K562 (cell line): ENCODE measurements at regions of chr9 and their contacts with region 1.

Region 1: GRCh38 chr9:1869843-1870242 is 145.3 kb upstream of the SMARCA2 start:
- DNase-seq: peak; percentile 10 to 36 (median 13)
- ATAC-seq: peak; percentile 77
- H3K4me3 ChIP-seq: no peak overlapping the region
- H3K27ac ChIP-seq: no peak overlapping the region
- H3K4me1 ChIP-seq: no peaks in the 10 kb centered on the region
- H3K27me3 ChIP-seq: no peaks in the 10 kb centered on the region
- CTCF ChIP-seq: peak; percentile 35 to 45 (median 38); a peak in 5 of 6 replicates
- EP300 ChIP-seq: no peak
- POLR2A ChIP-seq: no peak
- RAD21 ChIP-seq: peak in 1 of 2 experiments; percentile 45; a peak in 2 of 4 replicates

Region 2: DNA sequence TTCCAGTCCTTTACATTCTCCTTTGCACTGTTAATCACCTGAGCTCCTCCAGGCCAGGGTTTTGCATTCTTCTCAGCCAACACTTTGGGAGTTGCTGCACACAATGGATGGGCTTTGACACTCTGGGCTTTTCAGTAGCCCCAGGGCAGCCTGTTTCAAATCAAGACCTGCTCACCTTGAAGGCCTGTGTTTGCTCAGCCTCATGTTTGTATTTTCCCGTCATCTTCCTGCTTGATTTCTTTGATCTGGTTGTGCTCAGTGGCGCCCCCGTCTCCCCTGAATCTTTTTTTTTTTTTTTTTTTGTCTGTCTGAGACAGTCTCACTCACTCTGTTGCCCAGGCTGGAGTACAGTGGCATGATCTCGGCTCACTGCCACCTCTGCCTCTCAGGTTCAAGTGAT is 987.4 kb before region 1 on chr9:
- CTCF ChIA-PET with region 1: no interaction called
- POLR2A ChIA-PET with region 1: no interaction called
- in situ Hi-C with region 1: no loop called
- intact Hi-C with region 1: loop called (anchors 10 kb)
- DNase-seq: no peak
- ATAC-seq: no peak
- H3K4me3 ChIP-seq: no peak overlapping the region
- H3K27ac ChIP-seq: no peak overlapping the region
- H3K4me1 ChIP-seq: no peaks in the 10 kb centered on the region
- H3K27me3 ChIP-seq: peaks cover 0 to 8% of the 10 kb centered on the region in 2 experiments; a peak in 1 of 5 replicates
- CTCF ChIP-seq: no peak
- EP300 ChIP-seq: no peak
- POLR2A ChIP-seq: no peak
- RAD21 ChIP-seq: no peak

Region 3: GRCh38 chr9:3028535-3028934 is 1158.7 kb after region 1 on chr9:
- CTCF ChIA-PET with region 1: no interaction called
- POLR2A ChIA-PET with region 1: no interaction called
- in situ Hi-C with region 1: no loop called
- intact Hi-C with region 1: no loop called
- DNase-seq: no peak
- ATAC-seq: no peak
- H3K4me3 ChIP-seq: no peak overlapping the region
- H3K27ac ChIP-seq: no peak overlapping the region
- H3K4me1 ChIP-seq: no peaks in the 10 kb centered on the region
- H3K27me3 ChIP-seq: no peaks in the 10 kb centered on the region
- CTCF ChIP-seq: no peak
- EP300 ChIP-seq: no peak
- POLR2A ChIP-seq: no peak
- RAD21 ChIP-seq: no peak